ENCODE measurements at regions of chr17 and their contacts with region 1.

Region 1: DNA sequence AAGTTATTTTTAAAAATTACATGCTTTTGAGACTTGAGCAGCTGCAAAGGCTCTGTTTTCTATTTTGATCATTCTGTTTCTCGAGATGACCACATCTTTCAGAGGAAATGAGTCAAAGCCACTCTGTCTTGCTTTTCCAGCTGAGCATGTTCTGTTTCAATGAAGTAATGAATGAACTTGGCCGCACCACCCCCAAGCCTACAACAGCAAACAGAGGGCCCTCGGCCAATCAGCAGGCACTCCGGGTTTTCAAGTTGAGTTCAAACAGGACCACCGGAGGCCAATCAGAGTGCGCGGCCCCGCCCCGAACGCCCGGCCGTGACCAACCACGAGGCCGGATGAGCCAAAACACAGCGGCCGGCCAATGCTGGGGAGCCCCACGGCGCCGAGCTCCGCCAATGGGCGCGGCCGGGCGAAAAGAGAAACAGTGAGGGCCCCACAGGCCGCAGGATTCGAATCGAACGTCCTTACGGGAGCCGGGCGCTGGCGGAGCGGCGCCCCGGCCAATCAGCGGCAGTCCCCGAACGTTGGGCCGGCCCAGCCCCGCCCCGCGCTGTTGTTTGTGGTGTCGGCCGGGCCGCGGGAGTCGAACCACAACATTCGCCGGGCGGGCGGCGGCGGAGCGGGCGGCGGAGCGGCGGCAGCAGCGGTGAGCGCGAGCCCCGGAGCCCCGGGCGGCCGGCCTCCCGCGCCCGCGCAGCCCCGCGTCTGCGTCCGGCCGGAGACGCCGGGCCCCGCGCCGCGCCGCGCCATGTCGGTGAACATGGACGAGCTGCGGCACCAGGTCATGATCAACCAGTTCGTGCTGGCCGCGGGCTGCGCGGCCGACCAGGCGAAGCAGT is at the start of gene UBALD2:
- DNase-seq: peak; percentile 98 to 100 (median 99)
- H3K4me3 ChIP-seq: peak within 1 kb of the TSS; percentile 56 to 97 (median 77)
- H3K4me3 Mint-ChIP-seq: peak within 1 kb of the TSS; percentile 92 to 96
- H3K27ac ChIP-seq: peak within 1 kb of the TSS; percentile 84 to 87
- H3K27ac Mint-ChIP-seq: peak within 1 kb of the TSS; percentile 95 to 98 (median 96)
- H3K4me1 ChIP-seq: peaks cover 77 to 81% of the 10 kb centered on the region in 2 donors
- H3K4me1 Mint-ChIP-seq: peaks cover 76% of the 10 kb centered on the region
- H3K27me3 ChIP-seq: no peaks in the 10 kb centered on the region
- H3K27me3 Mint-ChIP-seq: peaks cover 0 to 8% (median 0%) of the 10 kb centered on the region in 3 donors
- CTCF ChIP-seq: no peak
- polyA plus RNA-seq, gene UBALD2: 1.4 to 88.6 (median 2.2) TPM

Region 2: DNA sequence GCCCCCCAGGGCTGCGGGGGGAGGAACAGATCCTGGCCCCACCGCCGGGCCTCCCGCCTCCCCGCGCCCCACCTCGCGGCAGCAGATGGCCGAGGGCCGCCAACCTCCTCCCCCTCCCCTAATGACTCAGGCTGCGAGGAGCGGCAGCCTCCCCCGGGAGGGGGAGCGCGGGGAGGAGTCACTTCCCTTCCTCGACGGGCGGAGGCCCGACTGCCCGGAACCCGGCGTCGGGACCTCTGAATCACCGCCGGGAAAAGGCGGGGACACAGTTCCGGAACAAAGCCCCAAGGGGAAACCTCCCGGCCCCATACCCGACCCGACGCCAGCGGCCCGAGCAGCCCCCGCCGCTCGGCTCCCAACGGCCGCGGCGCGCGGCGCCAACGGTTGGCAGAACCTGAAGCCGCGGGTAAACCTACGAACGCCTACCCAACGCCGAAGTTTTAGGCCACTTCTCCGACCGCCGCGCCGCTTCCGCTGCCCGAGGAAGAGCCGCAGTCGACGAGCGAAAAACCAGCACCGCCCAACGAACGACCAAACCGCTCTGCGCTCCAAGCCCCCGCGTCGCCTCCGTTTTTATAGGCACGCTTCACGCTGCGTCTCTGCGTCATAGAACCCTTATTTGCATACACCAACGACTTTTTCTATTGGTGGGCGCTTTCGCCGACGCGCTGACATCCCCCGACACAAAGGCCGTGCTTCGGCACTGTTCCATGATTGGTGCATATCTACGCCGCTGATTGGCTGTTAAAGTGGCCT is 485.6 kb before region 1 on chr17:
- intact Hi-C with region 1: loop called in 1 of 2 experiments (anchors 10 kb)
- DNase-seq: peak; percentile 99
- H3K4me3 ChIP-seq: peak overlapping the region; percentile 67 to 99 (median 96)
- H3K4me3 Mint-ChIP-seq: peak overlapping the region; percentile 93 to 99
- H3K27ac ChIP-seq: peak overlapping the region; percentile 93 to 95
- H3K27ac Mint-ChIP-seq: peak overlapping the region; percentile 96 to 99 (median 98)
- H3K4me1 ChIP-seq: peaks cover 46 to 60% of the 10 kb centered on the region in 2 donors
- H3K4me1 Mint-ChIP-seq: peaks cover 42% of the 10 kb centered on the region
- H3K27me3 ChIP-seq: no peaks in the 10 kb centered on the region
- H3K27me3 Mint-ChIP-seq: peaks cover 0 to 2% (median 1%) of the 10 kb centered on the region in 3 donors
- CTCF ChIP-seq: peak; percentile 33

Region 3: DNA sequence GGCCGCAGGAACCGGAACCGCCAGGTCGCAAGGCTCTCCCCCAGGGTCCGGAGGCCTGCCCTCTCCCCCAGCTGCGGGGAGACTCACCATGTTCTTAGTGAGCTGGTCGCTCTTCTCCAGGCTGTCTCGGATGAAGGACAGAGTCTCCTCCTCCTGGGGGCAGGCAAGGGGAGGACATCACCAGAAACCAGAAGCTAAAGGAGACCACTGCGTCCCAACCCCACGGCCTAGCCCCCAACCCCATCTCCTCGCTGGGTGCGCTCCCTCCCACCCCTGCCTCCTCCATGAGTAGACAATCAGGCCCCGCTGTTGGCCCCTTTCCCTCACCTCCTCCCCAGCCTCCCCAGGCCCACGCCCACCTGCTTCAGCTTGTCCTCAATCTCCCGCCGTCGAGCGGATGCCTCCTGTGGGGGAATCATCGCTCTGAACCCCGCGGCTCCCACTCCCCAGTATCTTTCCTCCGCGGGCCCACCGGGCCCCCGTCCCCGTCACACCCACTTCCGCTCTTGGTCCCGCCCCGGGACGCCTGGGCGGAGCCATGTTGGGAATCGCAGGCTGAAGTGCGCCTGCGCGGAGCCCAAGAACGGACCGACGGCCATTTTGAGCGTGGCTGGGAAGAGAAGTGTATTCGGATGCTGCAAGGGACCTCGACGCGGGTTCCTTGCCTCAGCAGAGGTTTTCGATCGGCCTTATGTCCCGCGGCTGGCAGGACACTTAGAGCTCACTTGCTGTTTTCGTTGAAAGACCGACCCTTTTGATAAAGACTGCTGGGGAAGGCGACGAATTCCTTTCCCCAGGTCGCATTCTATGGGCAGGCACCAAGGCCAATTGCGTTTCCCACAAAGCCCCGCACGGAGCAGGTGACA is 161.5 kb before region 1 on chr17 and contains the start of gene EXOC7:
- intact Hi-C with region 1: loop called in 1 of 2 experiments (anchors 5 kb)
- DNase-seq: peak; percentile 92 to 93 (median 92)
- H3K4me3 ChIP-seq: peak within 1 kb of the TSS; percentile 64 to 85 (median 81)
- H3K4me3 Mint-ChIP-seq: peak within 1 kb of the TSS; percentile 98
- H3K27ac ChIP-seq: peak within 1 kb of the TSS; percentile 80 to 85
- H3K27ac Mint-ChIP-seq: peak within 1 kb of the TSS; percentile 92 to 96 (median 93)
- H3K4me1 ChIP-seq: peaks cover 42 to 45% of the 10 kb centered on the region in 2 donors
- H3K4me1 Mint-ChIP-seq: peaks cover 34% of the 10 kb centered on the region
- H3K27me3 ChIP-seq: no peaks in the 10 kb centered on the region
- H3K27me3 Mint-ChIP-seq: peaks cover 0 to 2% (median 1%) of the 10 kb centered on the region in 3 donors
- CTCF ChIP-seq: no peak
- polyA plus RNA-seq, gene EXOC7: 30.7 to 86.5 (median 42.4) TPM

Region 4: GRCh38 chr17:76182016-76182764 is 82.8 kb before region 1 on chr17:
- intact Hi-C with region 1: loop called in 1 of 2 experiments (anchors 5 kb)
- DNase-seq: peak; percentile 81 to 88 (median 88)
- H3K4me3 ChIP-seq: no peak overlapping the region
- H3K4me3 Mint-ChIP-seq: peak overlapping the region; percentile 41 to 63
- H3K27ac ChIP-seq: no peak overlapping the region
- H3K27ac Mint-ChIP-seq: peak overlapping the region in 1 of 7 donors; percentile 57
- H3K4me1 ChIP-seq: peaks cover 0 to 7% of the 10 kb centered on the region in 2 donors
- H3K4me1 Mint-ChIP-seq: peaks cover 10% of the 10 kb centered on the region
- H3K27me3 ChIP-seq: no peaks in the 10 kb centered on the region
- H3K27me3 Mint-ChIP-seq: peaks cover 0 to 6% (median under 1%) of the 10 kb centered on the region in 3 donors
- CTCF ChIP-seq: peak; percentile 87

Region 5: DNA sequence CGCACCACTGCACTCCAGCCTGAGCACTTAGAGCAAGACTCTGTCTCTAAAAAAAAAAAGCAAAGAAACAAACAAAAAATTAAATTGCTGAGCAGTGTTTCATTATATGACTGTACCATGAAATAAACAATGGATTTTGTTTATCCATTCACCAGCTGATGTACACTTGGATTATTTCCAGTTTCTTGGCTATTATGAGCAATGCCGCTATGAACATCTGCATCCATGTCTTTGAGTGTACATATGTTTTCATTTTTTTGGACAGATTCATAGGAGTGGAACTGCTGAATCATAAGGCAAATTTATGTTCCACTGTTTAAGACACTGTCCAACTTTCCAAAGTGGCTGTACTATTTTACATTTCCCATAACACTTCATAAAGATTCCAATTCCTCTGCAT is 32.6 kb before region 1 on chr17:
- intact Hi-C with region 1: loop called (anchors 5 to 10 kb)
- DNase-seq: no peak
- H3K4me3 ChIP-seq: no peak overlapping the region
- H3K4me3 Mint-ChIP-seq: no peak overlapping the region
- H3K27ac ChIP-seq: no peak overlapping the region
- H3K27ac Mint-ChIP-seq: no peak overlapping the region
- H3K4me1 ChIP-seq: no peaks in the 10 kb centered on the region
- H3K4me1 Mint-ChIP-seq: peaks cover 5% of the 10 kb centered on the region
- H3K27me3 ChIP-seq: peaks cover 18 to 31% of the 10 kb centered on the region in 2 donors
- H3K27me3 Mint-ChIP-seq: peaks cover 17 to 36% (median 34%) of the 10 kb centered on the region in 3 donors
- CTCF ChIP-seq: no peak

Region 6: GRCh38 chr17:76252040-76252954 is 12.7 kb before region 1 on chr17:
- intact Hi-C with region 1: loop called in 1 of 2 experiments (anchors 1 kb)
- DNase-seq: peak; percentile 95 to 99 (median 96)
- H3K4me3 ChIP-seq: peak overlapping the region in 2 of 3 experiments; percentile 14 to 60
- H3K4me3 Mint-ChIP-seq: peak overlapping the region; percentile 54 to 79
- H3K27ac ChIP-seq: peak overlapping the region; percentile 94 to 97
- H3K27ac Mint-ChIP-seq: peak overlapping the region; percentile 95 to 98 (median 97)
- H3K4me1 ChIP-seq: peaks cover 50% of the 10 kb centered on the region in 2 donors
- H3K4me1 Mint-ChIP-seq: peaks cover 47% of the 10 kb centered on the region
- H3K27me3 ChIP-seq: no peaks in the 10 kb centered on the region
- H3K27me3 Mint-ChIP-seq: peaks cover 1 to 5% (median 2%) of the 10 kb centered on the region in 3 donors
- CTCF ChIP-seq: no peak

Region 7: GRCh38 chr17:76304226-76305134 is 39.5 kb after region 1 on chr17:
- intact Hi-C with region 1: no loop called
- DNase-seq: no peak
- H3K4me3 ChIP-seq: no peak overlapping the region
- H3K4me3 Mint-ChIP-seq: no peak overlapping the region
- H3K27ac ChIP-seq: no peak overlapping the region
- H3K27ac Mint-ChIP-seq: no peak overlapping the region
- H3K4me1 ChIP-seq: no peaks in the 10 kb centered on the region
- H3K4me1 Mint-ChIP-seq: no peaks in the 10 kb centered on the region
- H3K27me3 ChIP-seq: no peaks in the 10 kb centered on the region
- H3K27me3 Mint-ChIP-seq: peaks cover 0 to 5% (median 0%) of the 10 kb centered on the region in 3 donors
- CTCF ChIP-seq: no peak

Region 8: DNA sequence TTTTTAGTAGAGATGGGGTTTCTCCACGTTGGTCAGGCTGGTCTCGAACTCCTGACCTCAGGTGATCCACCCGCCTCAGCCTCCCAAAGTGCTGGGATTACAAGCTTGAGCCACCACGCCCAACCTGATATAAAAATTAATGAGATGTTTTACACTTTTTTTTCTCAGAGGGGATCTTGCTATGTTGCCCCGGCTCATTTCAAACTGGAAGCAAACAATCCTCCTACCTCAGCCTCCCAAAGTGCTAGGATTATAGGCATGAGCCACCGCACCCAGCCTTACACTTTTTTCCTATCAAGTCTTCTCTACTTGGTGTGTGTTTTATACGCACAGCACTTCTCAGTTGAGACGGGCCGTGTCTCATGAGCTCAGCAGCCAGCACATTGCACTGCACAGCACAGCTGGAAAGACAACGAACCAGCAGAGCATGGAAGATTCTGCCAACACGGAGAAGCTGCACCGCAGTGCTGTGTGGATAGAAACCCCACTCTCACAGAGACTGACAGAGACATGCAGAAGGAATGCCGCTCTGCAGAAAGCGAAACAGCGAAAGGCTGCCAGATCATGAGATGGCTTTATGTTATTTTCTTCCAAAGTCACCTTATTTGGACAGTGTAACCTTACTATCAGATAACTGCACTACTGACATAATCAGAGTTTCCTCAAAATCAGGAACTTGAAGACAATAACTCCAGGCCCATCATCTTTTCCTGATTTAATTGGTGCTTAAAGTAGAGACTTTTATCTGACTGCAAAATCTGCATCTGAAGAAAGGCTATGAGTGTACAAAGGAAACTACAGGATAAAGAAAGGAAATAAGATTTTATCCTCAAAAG is 49.6 kb after region 1 on chr17:
- intact Hi-C with region 1: no loop called
- DNase-seq: no peak
- H3K4me3 ChIP-seq: no peak overlapping the region
- H3K4me3 Mint-ChIP-seq: no peak overlapping the region
- H3K27ac ChIP-seq: no peak overlapping the region
- H3K27ac Mint-ChIP-seq: peak overlapping the region in 2 of 7 donors; percentile 44 to 56
- H3K4me1 ChIP-seq: no peaks in the 10 kb centered on the region
- H3K4me1 Mint-ChIP-seq: no peaks in the 10 kb centered on the region
- H3K27me3 ChIP-seq: no peaks in the 10 kb centered on the region
- H3K27me3 Mint-ChIP-seq: peaks cover 0 to 4% (median 0%) of the 10 kb centered on the region in 3 donors
- CTCF ChIP-seq: no peak

Region 9: DNA sequence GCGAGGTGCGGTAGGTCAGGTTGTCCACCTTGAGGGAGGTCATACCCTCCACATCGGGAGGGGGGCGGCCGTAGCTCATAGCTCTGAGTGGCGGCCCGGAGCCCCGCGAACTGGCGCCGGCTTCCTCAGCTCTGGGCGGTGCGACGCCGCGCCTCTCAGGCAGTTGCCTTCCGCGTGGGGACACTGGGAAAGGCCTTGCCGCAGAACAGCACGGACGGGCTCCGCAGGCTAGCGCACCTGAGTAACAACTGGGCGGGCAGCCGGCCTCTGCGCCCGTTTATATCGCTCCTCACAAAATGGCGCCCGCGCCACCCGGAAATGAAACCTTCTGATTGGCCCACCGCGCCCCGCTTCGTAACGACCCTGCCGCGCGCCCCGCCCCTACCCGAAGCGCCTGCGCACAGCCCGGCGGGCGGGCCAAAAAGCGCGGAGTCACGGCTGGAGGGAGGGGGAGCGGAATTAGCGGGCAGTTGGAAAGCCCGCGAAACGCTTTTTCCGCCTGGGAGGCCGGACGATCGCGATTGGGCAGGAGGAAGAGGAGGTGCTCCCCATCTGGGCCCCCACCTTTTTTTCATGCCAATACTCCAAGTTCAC is 472.2 kb after region 1 on chr17 and contains the start of gene SRSF2:
- intact Hi-C with region 1: loop called in 1 of 2 experiments (anchors 10 kb)
- DNase-seq: peak; percentile 95 to 98 (median 98)
- H3K4me3 ChIP-seq: peak within 1 kb of the TSS; percentile 95 to 100 (median 97)
- H3K4me3 Mint-ChIP-seq: peak within 1 kb of the TSS; percentile 98 to 99
- H3K27ac ChIP-seq: peak within 1 kb of the TSS; percentile 96 to 99
- H3K27ac Mint-ChIP-seq: peak within 1 kb of the TSS; percentile 98 to 100 (median 99)
- H3K4me1 ChIP-seq: peaks cover 34 to 45% of the 10 kb centered on the region in 2 donors
- H3K4me1 Mint-ChIP-seq: peaks cover 40% of the 10 kb centered on the region
- H3K27me3 ChIP-seq: no peaks in the 10 kb centered on the region
- H3K27me3 Mint-ChIP-seq: peaks cover 0 to 2% (median 0%) of the 10 kb centered on the region in 3 donors
- CTCF ChIP-seq: no peak
- polyA plus RNA-seq, gene SRSF2: 124 to 386 (median 125) TPM